ENCODE measurements at regions of chr10 and their contacts with region 1.

Region 1: DNA sequence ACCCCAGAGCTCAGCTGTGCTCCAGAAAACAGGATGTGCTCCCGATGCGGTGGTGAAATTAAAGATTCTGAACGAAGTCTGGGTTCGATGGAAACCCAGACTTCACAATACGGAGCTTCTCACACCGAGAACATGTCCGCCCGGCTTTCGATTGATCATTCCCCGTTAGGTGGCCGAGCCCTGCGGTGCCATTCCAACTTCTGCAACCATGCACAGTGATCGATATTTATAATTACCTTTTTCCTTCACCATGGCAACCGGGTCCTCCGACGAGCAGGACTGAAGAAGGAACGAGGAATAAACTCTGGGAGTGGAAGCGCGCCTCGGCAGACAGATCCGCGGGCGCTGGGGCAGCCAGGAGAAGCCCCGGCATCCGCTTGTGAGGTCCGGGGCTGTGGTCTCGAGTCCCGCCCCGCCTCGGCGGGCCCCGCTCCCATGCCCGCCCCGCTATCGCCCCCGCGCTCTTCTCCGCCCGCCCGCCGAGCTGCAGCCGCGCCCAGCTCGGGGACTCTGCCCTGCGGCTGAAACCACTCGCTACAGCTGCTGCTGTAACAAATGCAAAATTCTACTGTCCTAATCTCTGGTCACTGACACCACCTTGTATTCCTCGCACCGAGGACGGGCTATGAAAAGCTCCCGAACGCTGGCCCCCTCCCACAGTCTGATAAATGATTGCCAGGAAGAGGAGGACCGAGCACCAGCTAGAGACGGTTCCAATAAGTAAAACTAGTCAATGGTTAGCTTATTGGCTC is 26.2 kb downstream of the ABLIM1 start:
- DNase-seq: no peak
- H3K4me3 ChIP-seq: peak overlapping the region; percentile 43 to 69 (median 61)
- H3K27ac ChIP-seq: peak overlapping the region; percentile 59
- H3K4me1 ChIP-seq: peaks cover 57% of the 10 kb centered on the region
- H3K27me3 ChIP-seq: no peaks in the 10 kb centered on the region
- CTCF ChIP-seq: no peak

Region 2: DNA sequence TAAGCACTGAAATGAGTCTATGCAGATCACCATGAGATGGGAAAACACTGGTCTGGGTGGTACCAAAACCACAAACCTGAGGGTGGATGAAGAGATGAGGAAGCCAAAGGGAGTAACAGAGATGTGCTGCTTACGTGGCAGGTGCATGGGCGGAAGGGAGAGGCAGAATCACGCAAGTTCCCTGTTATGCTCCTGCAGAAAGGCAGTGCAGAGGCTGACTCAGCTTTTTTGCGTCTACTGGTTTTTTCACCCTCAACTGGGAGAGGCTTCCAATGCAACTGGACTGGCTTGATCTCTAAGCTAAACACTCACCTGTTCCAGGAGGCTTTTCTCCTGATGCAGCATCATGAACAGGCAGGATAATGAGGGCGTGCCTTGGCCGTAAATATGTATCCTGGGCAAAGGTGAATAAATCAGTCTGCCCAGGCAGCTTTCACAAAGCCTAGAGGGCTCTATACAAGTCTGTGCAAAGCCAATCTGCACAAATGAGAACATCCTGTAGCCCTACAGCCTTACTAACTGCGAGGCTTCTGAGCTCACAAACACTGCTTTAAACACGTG is 132.1 kb before region 1 on chr10:
- CTCF ChIA-PET with region 1: no interaction called
- dilution Hi-C with region 1: no loop called
- in situ Hi-C with region 1: no loop called
- intact Hi-C with region 1: no loop called
- DNase-seq: peak; percentile 97
- H3K4me3 ChIP-seq: no peak overlapping the region
- H3K27ac ChIP-seq: peak overlapping the region; percentile 84
- H3K4me1 ChIP-seq: peaks cover 27% of the 10 kb centered on the region
- H3K27me3 ChIP-seq: no peaks in the 10 kb centered on the region
- CTCF ChIP-seq: no peak

Region 3: GRCh38 chr10:114577133-114577532 is 54.7 kb before region 1 on chr10:
- CTCF ChIA-PET with region 1: no interaction called
- dilution Hi-C with region 1: no loop called
- in situ Hi-C with region 1: no loop called
- intact Hi-C with region 1: loop called (anchors 2 kb)
- DNase-seq: peak; percentile 74
- H3K4me3 ChIP-seq: no peak overlapping the region
- H3K27ac ChIP-seq: no peak overlapping the region
- H3K4me1 ChIP-seq: peaks cover 26% of the 10 kb centered on the region
- H3K27me3 ChIP-seq: no peaks in the 10 kb centered on the region
- CTCF ChIP-seq: no peak

Region 4: GRCh38 chr10:114648368-114648767 is 16.5 kb after region 1 on chr10:
- CTCF ChIA-PET with region 1: no interaction called
- dilution Hi-C with region 1: no loop called
- in situ Hi-C with region 1: no loop called
- intact Hi-C with region 1: loop called (anchors 1 kb)
- DNase-seq: peak; percentile 90
- H3K4me3 ChIP-seq: no peak overlapping the region
- H3K27ac ChIP-seq: no peak overlapping the region
- H3K4me1 ChIP-seq: peaks cover 19% of the 10 kb centered on the region
- H3K27me3 ChIP-seq: no peaks in the 10 kb centered on the region
- CTCF ChIP-seq: no peak

Region 5: GRCh38 chr10:114684085-114684821 is 52.4 kb after region 1 on chr10:
- CTCF ChIA-PET with region 1: no interaction called
- dilution Hi-C with region 1: no loop called
- in situ Hi-C with region 1: no loop called
- intact Hi-C with region 1: loop called (anchors 2 kb)
- DNase-seq: no peak
- H3K4me3 ChIP-seq: no peak overlapping the region
- H3K27ac ChIP-seq: no peak overlapping the region
- H3K4me1 ChIP-seq: peaks cover 36% of the 10 kb centered on the region
- H3K27me3 ChIP-seq: no peaks in the 10 kb centered on the region
- CTCF ChIP-seq: no peak

Region 6: DNA sequence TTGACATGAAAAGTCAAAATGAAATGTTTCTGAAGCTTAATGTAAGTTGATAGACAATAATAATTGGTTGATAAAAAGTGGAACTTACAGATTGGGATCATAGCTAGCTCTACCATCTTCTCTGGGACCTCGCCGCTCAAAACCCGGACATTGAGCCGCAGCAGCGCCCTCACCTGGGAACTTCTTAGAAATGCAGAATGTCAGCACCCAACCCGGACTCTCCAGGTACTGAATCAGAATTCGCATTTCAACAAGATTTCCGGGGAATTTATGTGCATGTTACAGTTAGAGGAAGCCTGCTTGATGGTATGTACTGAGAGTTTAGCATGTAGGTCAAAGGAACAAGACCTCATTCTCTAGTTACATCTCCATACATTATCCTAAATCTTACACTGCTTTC is 62.9 kb after region 1 on chr10:
- CTCF ChIA-PET with region 1: no interaction called
- dilution Hi-C with region 1: no loop called
- in situ Hi-C with region 1: no loop called
- intact Hi-C with region 1: loop called (anchors 2 kb)
- DNase-seq: no peak
- H3K4me3 ChIP-seq: no peak overlapping the region
- H3K27ac ChIP-seq: no peak overlapping the region
- H3K4me1 ChIP-seq: peaks cover 25% of the 10 kb centered on the region
- H3K27me3 ChIP-seq: no peaks in the 10 kb centered on the region
- CTCF ChIP-seq: peak; percentile 52 to 66

Region 7: DNA sequence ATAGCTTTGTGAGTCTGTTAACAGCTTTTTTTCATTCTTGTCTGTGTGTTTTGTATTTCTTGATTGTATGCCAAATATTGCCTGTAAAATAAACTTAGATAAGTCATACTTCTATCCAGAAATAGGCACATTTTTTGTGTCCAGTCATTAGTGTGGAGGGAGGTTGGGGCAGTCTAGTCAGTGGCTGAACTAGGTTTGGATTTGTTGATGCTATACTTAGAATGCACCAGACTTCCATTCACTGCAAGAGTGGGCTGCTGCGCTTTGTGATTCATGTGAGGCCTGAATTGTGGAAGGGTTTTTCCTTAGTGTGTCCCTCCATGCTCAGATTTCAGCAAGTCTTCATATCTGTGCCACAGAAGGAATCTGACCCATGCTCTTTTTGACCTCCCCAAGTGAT is 356.2 kb after region 1 on chr10:
- CTCF ChIA-PET with region 1: no interaction called
- dilution Hi-C with region 1: no loop called
- in situ Hi-C with region 1: no loop called
- intact Hi-C with region 1: no loop called
- DNase-seq: peak; percentile 2
- H3K4me3 ChIP-seq: no peak overlapping the region
- H3K27ac ChIP-seq: no peak overlapping the region
- H3K4me1 ChIP-seq: no peaks in the 10 kb centered on the region
- H3K27me3 ChIP-seq: no peaks in the 10 kb centered on the region
- CTCF ChIP-seq: no peak

Region 8: DNA sequence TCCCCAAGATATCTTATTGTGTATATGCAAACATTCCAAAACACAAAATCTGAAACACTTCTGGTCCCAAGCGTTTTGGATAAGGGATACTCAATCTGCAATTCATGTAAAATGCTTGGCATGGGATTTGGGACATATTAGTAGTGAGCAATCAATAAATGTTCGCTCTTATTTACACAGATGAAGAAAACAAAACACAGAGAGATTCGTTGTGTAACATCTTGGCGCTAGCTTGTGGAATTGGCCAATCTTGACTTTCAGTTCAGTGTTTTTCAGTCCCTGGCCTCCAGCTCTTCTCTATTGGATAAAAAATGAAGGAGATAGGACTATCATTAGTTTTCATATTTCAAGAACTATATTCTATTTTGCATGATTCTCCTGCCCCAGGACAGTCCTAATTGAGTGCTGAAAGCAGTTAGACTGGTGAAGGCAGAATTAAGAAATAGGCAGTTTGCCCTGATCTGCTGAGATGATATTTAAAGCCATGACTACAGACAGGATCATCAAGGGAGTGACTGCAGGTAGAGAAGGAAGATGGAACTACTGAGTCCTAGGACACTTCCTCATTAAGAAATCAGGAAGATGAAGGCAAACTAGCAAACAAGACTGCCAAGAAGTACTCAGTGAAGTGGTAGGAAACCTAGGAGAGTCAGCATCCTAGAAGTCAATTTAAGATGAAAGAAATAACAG is 1797.6 kb after region 1 on chr10:
- CTCF ChIA-PET with region 1: no interaction called
- dilution Hi-C with region 1: no loop called
- in situ Hi-C with region 1: no loop called
- intact Hi-C with region 1: loop called (anchors 10 kb)
- DNase-seq: peak; percentile 65
- H3K4me3 ChIP-seq: peak overlapping the region; percentile 54 to 100 (median 98)
- H3K27ac ChIP-seq: peak overlapping the region; percentile 97
- H3K4me1 ChIP-seq: peaks cover 43% of the 10 kb centered on the region
- H3K27me3 ChIP-seq: no peaks in the 10 kb centered on the region
- CTCF ChIP-seq: no peak

Measured in mammary epithelial cell (primary cell).